AG04450 (cell line): ENCODE measurements at regions of chr5 and their contacts with region 1.

Region 1: GRCh38 chr5:73215891-73216610 is 43.1 kb downstream of the TMEM174 start:
- DNase-seq: peak; percentile 38
- H3K4me3 ChIP-seq: peak overlapping the region; percentile 62
- H3K27ac ChIP-seq: peak overlapping the region; percentile 59
- H3K27me3 ChIP-seq: no peaks in the 10 kb centered on the region
- CTCF ChIP-seq: peak; percentile 67

Region 2: DNA sequence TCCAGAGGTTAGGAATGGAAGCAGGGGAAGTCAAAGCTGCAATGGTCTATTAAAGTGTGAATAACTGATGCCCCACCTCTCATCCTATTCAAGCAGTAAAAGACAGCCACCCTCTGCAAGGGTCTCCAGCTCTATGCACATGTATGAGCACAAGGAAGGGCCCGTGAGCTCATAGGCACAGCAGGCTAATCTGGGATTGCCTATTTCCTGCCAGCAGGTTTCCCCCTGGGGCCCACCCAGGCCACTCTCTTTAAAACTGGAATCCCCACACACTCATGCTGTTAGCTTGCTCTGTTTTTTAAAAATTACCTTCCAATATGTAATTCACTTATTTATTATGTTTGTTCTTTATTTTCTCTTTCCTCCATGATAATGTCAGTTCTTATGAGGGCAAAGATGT is 660.2 kb before region 1 on chr5:
- CTCF ChIA-PET with region 1: interaction called, 12 read pairs
- POLR2A ChIA-PET with region 1: no interaction called
- DNase-seq: no peak
- H3K4me3 ChIP-seq: no peak overlapping the region
- H3K27ac ChIP-seq: no peak overlapping the region
- H3K27me3 ChIP-seq: no peaks in the 10 kb centered on the region
- CTCF ChIP-seq: no peak

Region 3: DNA sequence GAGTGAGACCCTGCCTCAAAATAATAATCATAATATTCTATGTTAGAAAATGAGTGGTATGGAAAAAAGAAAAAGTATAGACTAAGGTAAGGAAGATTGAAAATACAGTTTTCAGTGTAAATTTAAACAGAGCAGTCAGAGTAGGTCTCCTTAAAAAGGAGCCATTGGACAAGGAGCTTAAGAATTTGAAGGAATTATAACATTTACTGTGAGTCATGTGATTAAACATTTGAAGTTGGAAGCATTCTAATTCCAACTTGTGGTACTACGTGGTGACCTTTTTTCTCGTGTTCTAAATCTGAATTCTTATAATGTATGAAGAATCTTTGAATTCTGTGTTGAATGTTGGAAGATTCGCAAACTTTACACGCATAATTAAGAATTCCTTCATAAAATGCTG is 135.0 kb before region 1 on chr5:
- CTCF ChIA-PET with region 1: interaction called, 38 read pairs
- POLR2A ChIA-PET with region 1: interaction called, 3 read pairs
- DNase-seq: no peak
- H3K4me3 ChIP-seq: no peak overlapping the region
- H3K27ac ChIP-seq: no peak overlapping the region
- H3K27me3 ChIP-seq: no peaks in the 10 kb centered on the region
- CTCF ChIP-seq: no peak

Region 4: GRCh38 chr5:73110190-73110589 is 105.9 kb before region 1 on chr5:
- CTCF ChIA-PET with region 1: interaction called, 10 read pairs
- POLR2A ChIA-PET with region 1: no interaction called
- DNase-seq: no peak
- H3K4me3 ChIP-seq: no peak overlapping the region
- H3K27ac ChIP-seq: no peak overlapping the region
- H3K27me3 ChIP-seq: no peaks in the 10 kb centered on the region
- CTCF ChIP-seq: no peak

Region 5: DNA sequence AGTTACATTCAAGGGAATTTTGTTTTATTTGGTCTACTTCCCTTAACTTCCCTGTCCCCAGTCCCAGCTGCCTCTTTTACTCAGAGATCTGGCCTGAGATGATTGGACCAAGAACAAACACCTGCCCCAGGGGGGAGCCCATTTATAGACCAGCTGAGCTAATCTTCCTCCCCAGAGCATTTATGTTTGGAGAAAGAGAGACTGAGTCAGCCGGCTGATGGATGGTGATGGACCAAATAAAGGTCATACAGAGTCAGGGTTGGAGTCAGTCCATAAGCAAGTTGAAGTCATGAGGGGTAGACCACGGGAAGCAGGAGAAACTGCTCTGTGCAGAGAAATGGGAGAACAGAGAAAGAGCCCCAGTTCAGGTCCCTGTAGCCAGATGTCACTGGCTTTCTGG is 34.6 kb after region 1 on chr5:
- CTCF ChIA-PET with region 1: interaction called, 11 read pairs
- POLR2A ChIA-PET with region 1: no interaction called
- DNase-seq: no peak
- H3K4me3 ChIP-seq: no peak overlapping the region
- H3K27ac ChIP-seq: no peak overlapping the region
- H3K27me3 ChIP-seq: peaks cover 4% of the 10 kb centered on the region
- CTCF ChIP-seq: no peak

Region 6: DNA sequence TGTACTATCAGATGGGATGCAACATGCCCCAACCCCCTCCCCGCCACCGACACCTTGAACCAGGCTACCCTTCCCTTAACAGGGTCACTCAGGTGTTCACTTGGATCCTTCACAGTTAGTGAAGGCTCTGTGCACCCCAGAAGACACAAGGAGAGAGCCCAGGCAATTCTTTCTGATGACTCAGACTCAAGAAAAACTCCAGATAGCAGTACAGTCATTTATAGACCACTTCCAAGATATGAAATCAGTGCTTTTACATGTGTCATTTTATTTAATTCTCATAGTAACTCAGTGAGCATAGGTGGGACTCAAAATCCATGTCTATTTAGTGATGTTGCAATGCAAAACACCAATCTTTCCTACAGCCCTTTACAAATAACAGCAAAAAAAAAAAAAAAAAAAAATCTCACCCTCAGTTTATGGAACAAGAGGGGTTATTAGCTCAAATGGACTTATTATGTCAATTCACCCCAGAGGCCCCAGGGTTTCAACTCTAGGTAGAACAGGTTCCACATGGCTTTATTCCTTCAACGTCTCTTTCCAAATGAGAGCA is 160.6 kb after region 1 on chr5:
- CTCF ChIA-PET with region 1: interaction called, 12 read pairs
- POLR2A ChIA-PET with region 1: no interaction called
- DNase-seq: no peak
- H3K4me3 ChIP-seq: no peak overlapping the region
- H3K27ac ChIP-seq: no peak overlapping the region
- H3K27me3 ChIP-seq: no peaks in the 10 kb centered on the region
- CTCF ChIP-seq: no peak

Region 7: DNA sequence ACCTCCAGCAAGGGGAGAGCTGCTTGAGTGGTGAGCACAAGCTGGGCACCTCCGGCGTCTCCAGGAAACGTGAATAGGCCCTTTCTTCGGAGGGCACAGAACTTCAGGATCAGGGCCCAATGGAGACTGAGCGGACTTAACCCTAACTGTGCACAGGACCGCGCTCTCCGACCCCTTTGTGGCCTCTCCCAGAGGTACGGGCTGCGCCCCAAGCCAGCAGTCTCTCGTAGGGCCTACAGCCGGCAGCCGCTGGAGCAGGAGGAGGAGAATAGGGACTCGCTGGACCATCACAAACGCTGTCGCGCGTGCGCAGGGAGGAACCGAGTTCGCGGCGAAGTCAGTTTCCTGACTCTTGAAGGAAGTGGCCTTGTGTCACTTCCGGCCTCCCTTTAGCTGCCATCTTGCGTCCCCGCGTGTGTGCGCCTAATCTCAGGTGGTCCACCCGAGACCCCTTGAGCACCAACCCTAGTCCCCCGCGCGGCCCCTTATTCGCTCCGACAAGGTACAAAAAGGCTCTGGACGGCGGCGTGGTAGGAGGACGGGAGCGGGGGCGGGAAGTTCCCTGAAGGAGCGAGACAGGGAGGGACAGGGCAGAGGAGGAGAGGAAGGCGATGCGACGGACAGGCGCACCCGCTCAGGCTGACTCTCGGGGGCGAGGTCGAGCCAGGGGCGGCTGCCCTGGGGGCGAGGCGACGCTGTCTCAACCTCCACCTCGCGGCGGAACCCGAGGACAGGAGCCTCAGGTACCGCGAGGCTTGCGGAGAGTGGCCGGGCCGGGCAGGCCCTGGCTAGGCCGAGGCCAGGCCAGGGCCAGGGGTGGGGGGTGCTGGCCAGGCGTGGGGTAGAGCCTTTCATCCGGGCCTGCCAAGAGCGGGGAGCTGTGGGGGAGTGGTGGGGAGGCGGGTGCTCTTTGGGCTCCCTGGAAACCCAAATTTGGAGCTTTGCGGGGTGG is 282.3 kb after region 1 on chr5 and contains the start of gene BTF3:
- CTCF ChIA-PET with region 1: interaction called, 25 read pairs
- POLR2A ChIA-PET with region 1: interaction called, 3 read pairs
- DNase-seq: peak; percentile 92
- H3K4me3 ChIP-seq: peak within 1 kb of the TSS; percentile 86
- H3K27ac ChIP-seq: peak within 1 kb of the TSS; percentile 88
- H3K27me3 ChIP-seq: no peaks in the 10 kb centered on the region
- CTCF ChIP-seq: no peak
- polyA plus RNA-seq, gene BTF3: 707 and 755 TPM in 2 replicates